ENCODE measurements at regions of chr19 and their contacts with region 1.

Region 1: GRCh38 chr19:10027158-10027693 is 13.9 kb downstream of the RDH8 start:
- DNase-seq: no peak
- H3K4me3 Mint-ChIP-seq: no peak overlapping the region
- H3K27ac Mint-ChIP-seq: no peak overlapping the region
- H3K4me1 Mint-ChIP-seq: peaks cover 2% of the 10 kb centered on the region
- H3K27me3 Mint-ChIP-seq: peaks cover 9% of the 10 kb centered on the region

Region 2: DNA sequence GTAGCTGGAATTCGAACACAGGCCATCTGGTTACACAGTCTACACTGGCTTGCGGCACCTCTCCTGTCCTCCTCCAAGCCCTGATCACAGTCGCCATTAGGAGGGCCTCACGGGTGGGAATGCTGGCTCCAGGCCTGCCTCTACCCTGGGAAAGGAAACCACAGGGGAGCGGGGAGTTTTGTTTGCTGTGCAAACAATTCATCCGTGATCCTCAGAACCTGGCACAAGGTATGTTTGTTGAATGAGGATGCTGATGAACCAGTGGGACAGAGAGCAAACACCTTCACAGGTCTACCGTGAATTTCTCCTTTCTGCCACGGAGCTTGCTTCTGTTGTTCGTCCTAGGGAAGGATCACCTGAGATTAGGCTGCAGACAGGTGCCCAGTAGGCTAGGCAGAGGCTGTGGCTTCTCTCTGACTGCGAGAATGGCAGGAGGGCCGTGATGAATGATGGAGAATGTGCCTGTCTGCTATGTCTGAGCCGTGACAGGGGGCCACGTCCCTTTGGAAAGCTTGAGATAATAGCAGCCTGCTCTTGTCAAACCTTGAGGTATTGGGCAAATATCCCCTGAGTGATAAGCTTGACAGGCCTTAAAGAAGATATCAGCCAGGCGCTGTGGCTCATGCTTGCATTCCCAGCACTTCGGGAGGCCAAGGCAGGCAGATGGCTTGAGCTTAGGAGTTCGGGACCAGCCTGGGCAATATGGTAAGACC is 155.4 kb before region 1 on chr19:
- CTCF ChIA-PET with region 1: no interaction called
- POLR2A ChIA-PET with region 1: no interaction called
- intact Hi-C with region 1: no loop called
- DNase-seq: no peak
- H3K4me3 Mint-ChIP-seq: no peak overlapping the region
- H3K27ac Mint-ChIP-seq: no peak overlapping the region
- H3K4me1 Mint-ChIP-seq: peaks cover 2% of the 10 kb centered on the region
- H3K27me3 Mint-ChIP-seq: no peaks in the 10 kb centered on the region

Region 3: GRCh38 chr19:9923440-9923839 is 103.8 kb before region 1 on chr19:
- CTCF ChIA-PET with region 1: interaction called, 19 read pairs
- POLR2A ChIA-PET with region 1: no interaction called
- intact Hi-C with region 1: no loop called
- DNase-seq: no peak
- H3K4me3 Mint-ChIP-seq: no peak overlapping the region
- H3K27ac Mint-ChIP-seq: no peak overlapping the region
- H3K4me1 Mint-ChIP-seq: no peaks in the 10 kb centered on the region
- H3K27me3 Mint-ChIP-seq: peaks cover 14% of the 10 kb centered on the region

Region 4: DNA sequence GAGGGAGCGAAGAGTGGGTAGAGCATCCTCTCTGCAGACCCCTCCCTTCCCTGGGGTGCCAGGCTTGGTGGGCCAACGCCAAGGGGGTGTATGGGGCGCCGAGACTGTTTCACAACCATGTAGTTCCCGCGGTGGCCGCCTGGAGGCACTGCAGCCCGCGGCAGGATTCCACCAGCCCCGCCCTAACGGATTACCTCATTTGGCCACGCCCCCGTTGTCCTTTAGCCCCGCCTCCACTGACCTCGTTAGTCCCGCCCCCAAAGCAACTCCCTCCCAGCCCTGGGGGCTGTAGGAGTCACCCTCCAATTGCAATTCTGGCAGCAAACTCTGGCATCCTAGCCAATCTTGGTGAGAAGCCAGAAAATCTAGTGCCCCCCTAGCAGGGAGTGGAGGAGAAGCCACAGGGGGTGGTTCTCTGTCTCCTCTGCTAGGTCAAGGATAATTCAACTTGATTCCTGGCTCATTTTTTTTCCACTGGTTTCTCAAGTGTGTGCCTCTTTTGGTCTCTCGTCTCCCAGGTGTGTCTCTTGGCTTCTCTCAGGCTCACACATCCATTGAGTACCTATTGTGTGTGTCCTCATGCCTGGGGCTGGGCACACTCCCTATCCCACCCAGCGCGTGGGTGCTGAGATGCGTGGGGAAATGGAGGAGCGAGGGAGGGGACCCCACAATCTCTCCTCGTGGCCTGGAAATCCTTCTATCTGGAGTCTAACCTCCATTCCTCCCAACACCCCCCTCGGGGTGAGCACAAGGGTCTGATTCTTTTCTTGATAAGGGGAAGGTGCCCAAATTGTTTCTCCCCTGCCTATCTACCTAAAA is 92.9 kb before region 1 on chr19:
- CTCF ChIA-PET with region 1: interaction called, 133 read pairs
- POLR2A ChIA-PET with region 1: interaction called, 3 read pairs
- intact Hi-C with region 1: loop called (anchors 1 kb)
- DNase-seq: peak; percentile 90
- H3K4me3 Mint-ChIP-seq: no peak overlapping the region
- H3K27ac Mint-ChIP-seq: no peak overlapping the region
- H3K4me1 Mint-ChIP-seq: peaks cover 28% of the 10 kb centered on the region
- H3K27me3 Mint-ChIP-seq: peaks cover 46% of the 10 kb centered on the region

Measured in activated CD4-positive, alpha-beta memory T cell treated with anti-CD3 and anti-CD28 coated beads for 36 hours (primary cell).